ENCODE measurements at regions of chr17 and their contacts with region 1.

Region 1: GRCh38 chr17:8518326-8518725 is 82.6 kb downstream of the NDEL1 start:
- DNase-seq: no peak
- H3K4me3 ChIP-seq: no peak overlapping the region
- H3K27ac ChIP-seq: peak overlapping the region; percentile 44 to 62
- H3K4me1 ChIP-seq: peaks cover 10 to 33% of the 10 kb centered on the region in 2 donors
- H3K27me3 ChIP-seq: no peaks in the 10 kb centered on the region
- CTCF ChIP-seq: no peak

Region 2: DNA sequence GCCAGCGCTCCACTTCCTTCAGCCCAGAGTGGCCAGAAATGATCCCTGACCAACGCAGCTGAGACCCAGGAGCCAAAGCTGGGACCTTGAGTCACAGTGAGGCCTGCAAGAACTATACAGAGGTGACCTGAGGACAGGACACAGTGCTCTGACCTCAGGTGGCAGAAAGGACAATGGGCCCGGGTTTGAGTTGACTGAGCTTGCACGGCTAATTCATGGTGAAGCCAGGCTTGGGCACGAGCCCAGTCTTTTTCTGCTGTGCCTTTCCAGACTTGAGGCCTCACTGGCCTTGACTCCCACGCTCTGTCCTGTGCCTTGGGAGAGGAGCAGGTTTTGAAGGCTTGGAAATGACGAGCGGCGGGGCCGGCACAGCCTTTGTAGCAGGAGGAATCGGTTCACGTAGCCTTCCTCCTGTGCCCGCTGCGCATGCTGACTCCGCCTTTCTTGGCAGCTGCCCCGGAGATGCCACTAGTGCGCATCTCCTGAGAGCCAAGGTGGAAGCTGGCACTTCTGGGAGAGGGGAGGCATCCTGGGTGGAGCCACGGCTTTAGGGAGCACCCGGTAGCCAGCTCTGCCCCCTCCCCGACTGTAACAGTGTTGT is 47.8 kb before region 1 on chr17:
- intact Hi-C with region 1: loop called (anchors 5 kb)
- DNase-seq: no peak
- H3K4me3 ChIP-seq: no peak overlapping the region
- H3K27ac ChIP-seq: peak overlapping the region; percentile 76 to 82
- H3K4me1 ChIP-seq: peaks cover 4 to 66% of the 10 kb centered on the region in 2 donors
- H3K27me3 ChIP-seq: no peaks in the 10 kb centered on the region
- CTCF ChIP-seq: no peak

Region 3: GRCh38 chr17:8552577-8553320 is 34.4 kb after region 1 on chr17:
- intact Hi-C with region 1: loop called (anchors 5 kb)
- DNase-seq: no peak
- H3K4me3 ChIP-seq: no peak overlapping the region
- H3K27ac ChIP-seq: peak overlapping the region; percentile 57 to 73
- H3K4me1 ChIP-seq: peaks cover 16 to 43% of the 10 kb centered on the region in 2 donors
- H3K27me3 ChIP-seq: no peaks in the 10 kb centered on the region
- CTCF ChIP-seq: no peak

Region 4: GRCh38 chr17:8588877-8589554 is 70.7 kb after region 1 on chr17:
- intact Hi-C with region 1: no loop called
- DNase-seq: no peak
- H3K4me3 ChIP-seq: peak overlapping the region; percentile 9 to 37
- H3K27ac ChIP-seq: peak overlapping the region; percentile 65 to 83
- H3K4me1 ChIP-seq: peaks cover 7 to 59% of the 10 kb centered on the region in 2 donors
- H3K27me3 ChIP-seq: no peaks in the 10 kb centered on the region
- CTCF ChIP-seq: no peak

Measured in ascending aorta (tissue), 2 donors.